ENCODE measurements at regions of chr11 and their contacts with region 1.

Region 1: GRCh38 chr11:72080256-72080974 is at the starts of genes LRRC51 and NUMA1:
- DNase-seq: peak; percentile 100
- H3K4me3 ChIP-seq: peak within 1 kb of the TSS; percentile 82 to 90
- H3K27ac ChIP-seq: peak within 1 kb of the TSS; percentile 89 to 91
- H3K4me1 ChIP-seq: peaks cover 5 to 14% of the 10 kb centered on the region in 2 donors
- H3K27me3 ChIP-seq: no peaks in the 10 kb centered on the region
- CTCF ChIP-seq: no peak
- total RNA-seq, gene LRRC51: 12.9 TPM
- total RNA-seq, gene NUMA1: 289 TPM

Region 2: DNA sequence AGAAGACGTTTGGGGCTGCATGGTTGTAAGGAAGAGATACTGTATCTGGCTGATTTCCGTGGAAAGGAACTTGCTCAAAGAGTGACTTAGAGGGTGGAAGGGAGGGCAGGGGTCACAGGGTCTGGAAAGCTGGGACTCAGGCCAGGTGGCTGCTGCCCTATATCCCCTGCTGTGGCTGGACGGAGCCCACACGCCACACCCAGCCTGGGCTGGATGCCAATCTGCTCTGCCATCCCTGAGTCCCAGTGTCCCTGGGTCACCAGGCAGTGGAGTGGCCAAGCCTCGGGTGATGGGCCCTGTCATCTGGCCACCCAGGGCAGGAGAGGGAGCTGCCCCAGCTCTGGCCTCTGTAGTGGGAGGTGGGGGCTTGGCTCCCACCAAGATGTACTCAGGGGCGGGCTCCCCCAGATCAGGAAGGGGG is 579.8 kb before region 1 on chr11:
- intact Hi-C with region 1: no loop called
- DNase-seq: peak in 1 of 2 donors; percentile 52
- H3K4me3 ChIP-seq: no peak overlapping the region
- H3K27ac ChIP-seq: no peak overlapping the region
- H3K4me1 ChIP-seq: no peaks in the 10 kb centered on the region
- H3K27me3 ChIP-seq: no peaks in the 10 kb centered on the region
- CTCF ChIP-seq: no peak

Region 3: GRCh38 chr11:72040726-72041441 is 39.5 kb before region 1 on chr11:
- intact Hi-C with region 1: loop called (anchors 1 kb)
- DNase-seq: peak; percentile 82 to 97
- H3K4me3 ChIP-seq: peak overlapping the region; percentile 59 to 68
- H3K27ac ChIP-seq: peak overlapping the region; percentile 97
- H3K4me1 ChIP-seq: peaks cover 8 to 48% of the 10 kb centered on the region in 2 donors
- H3K27me3 ChIP-seq: no peaks in the 10 kb centered on the region
- CTCF ChIP-seq: no peak

Region 4: DNA sequence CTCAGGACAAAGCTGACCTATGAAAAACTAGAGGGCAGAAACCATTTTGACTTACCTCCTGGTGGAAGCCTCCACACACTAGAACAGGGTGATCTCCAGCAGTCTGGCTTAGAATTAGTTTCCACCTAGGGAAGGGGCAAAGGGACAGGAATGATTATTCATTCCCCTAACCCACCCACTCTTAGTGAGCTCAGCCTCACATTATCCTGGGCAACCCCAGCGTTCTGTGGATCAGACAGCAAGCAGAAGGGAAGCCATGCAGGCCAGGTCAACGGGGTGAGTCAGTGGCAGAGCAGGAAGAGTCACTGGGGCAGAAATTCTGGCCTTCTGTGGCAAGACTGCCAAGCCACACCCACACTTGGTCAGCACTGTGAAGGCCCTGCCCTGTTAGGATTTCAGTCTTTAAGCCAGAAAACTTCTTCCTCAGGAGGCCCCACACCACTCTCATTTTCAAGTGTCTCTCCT is 10.6 kb before region 1 on chr11:
- intact Hi-C with region 1: loop called (anchors 1 kb)
- DNase-seq: peak; percentile 74 to 95
- H3K4me3 ChIP-seq: peak overlapping the region; percentile 10 to 16
- H3K27ac ChIP-seq: peak overlapping the region; percentile 85 to 87
- H3K4me1 ChIP-seq: peaks cover 6 to 31% of the 10 kb centered on the region in 2 donors
- H3K27me3 ChIP-seq: no peaks in the 10 kb centered on the region
- CTCF ChIP-seq: no peak

Region 5: GRCh38 chr11:72102946-72103753 is 22.7 kb after region 1 on chr11 and contains the start of gene LAMTOR1:
- intact Hi-C with region 1: loop called (anchors 1 kb)
- DNase-seq: peak; percentile 97 to 100
- H3K4me3 ChIP-seq: peak within 1 kb of the TSS; percentile 78 to 80
- H3K27ac ChIP-seq: peak within 1 kb of the TSS; percentile 86 to 94
- H3K4me1 ChIP-seq: peaks cover 10 to 18% of the 10 kb centered on the region in 2 donors
- H3K27me3 ChIP-seq: no peaks in the 10 kb centered on the region
- CTCF ChIP-seq: peak; percentile 31 to 67 (median 58)
- total RNA-seq, gene LAMTOR1: 148 TPM

Measured in ascending aorta (tissue), 2 donors.